Ascending aorta (tissue), 2 donors: ENCODE measurements at regions of chr14 and their contacts with region 1.

Region 1: DNA sequence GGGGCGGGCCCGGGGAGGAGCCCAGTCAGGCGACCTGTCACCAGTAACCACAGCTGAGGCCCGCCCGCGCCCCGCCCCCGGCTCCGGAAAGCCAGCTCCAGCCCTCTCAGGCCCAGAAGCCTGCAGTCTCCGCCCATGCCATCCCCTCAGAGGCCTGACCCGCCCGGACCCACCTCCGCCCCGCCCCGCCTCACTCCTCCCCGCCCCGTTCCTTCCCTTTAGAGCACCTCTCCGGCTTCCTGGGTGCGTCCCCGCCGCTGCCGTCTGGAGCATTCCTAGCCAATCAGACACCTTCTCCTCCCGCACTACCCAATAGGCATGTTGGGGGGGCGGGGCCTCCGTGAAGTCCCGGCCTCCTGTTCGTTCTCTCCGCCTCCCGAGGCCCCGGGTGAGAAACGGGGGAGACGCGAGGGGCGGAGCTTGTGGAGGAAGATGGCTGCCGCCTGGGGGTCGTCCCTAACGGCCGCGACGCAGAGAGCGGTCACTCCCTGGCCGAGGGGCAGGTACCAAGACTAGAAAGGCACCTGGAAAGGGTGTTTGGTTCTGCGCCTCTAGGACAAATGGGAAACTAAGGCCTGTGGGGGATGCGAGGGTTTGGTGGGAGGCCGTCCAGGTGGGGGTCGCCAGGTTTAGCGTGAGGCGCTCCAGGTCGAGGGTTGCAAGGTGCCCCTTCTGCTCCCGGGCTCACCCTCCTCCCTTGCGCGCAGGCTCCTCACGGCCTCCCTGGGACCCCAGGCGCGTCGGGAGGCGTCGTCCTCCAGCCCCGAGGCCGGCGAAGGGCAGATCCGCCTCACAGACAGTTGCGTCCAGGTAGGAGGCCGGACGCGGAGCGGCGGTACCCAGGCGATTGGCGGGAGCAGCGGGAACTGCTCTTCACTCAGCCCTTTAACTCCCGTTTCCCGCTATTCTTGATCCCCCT is at the start of gene ISCA2:
- DNase-seq: peak; percentile 99 to 100
- H3K4me3 ChIP-seq: peak within 1 kb of the TSS; percentile 91 to 93
- H3K27ac ChIP-seq: peak within 1 kb of the TSS; percentile 94 to 95
- H3K4me1 ChIP-seq: peaks cover 0 to 7% of the 10 kb centered on the region in 2 donors
- H3K27me3 ChIP-seq: no peaks in the 10 kb centered on the region
- CTCF ChIP-seq: no peak
- total RNA-seq, gene ISCA2: 10.0 TPM

Region 2: GRCh38 chr14:74362361-74362915 is 131.2 kb before region 1 on chr14:
- intact Hi-C with region 1: loop called (anchors 5 kb)
- DNase-seq: peak in 1 of 2 donors; percentile 88
- H3K4me3 ChIP-seq: no peak overlapping the region
- H3K27ac ChIP-seq: no peak overlapping the region
- H3K4me1 ChIP-seq: no peaks in the 10 kb centered on the region
- H3K27me3 ChIP-seq: no peaks in the 10 kb centered on the region
- CTCF ChIP-seq: peak; percentile 93 to 95 (median 94)

Region 3: GRCh38 chr14:74630881-74631690 is 137.5 kb after region 1 on chr14:
- intact Hi-C with region 1: no loop called
- DNase-seq: no peak
- H3K4me3 ChIP-seq: no peak overlapping the region
- H3K27ac ChIP-seq: peak overlapping the region; percentile 77 to 81
- H3K4me1 ChIP-seq: peaks cover 0 to 16% of the 10 kb centered on the region in 2 donors
- H3K27me3 ChIP-seq: no peaks in the 10 kb centered on the region
- CTCF ChIP-seq: no peak

Region 4: DNA sequence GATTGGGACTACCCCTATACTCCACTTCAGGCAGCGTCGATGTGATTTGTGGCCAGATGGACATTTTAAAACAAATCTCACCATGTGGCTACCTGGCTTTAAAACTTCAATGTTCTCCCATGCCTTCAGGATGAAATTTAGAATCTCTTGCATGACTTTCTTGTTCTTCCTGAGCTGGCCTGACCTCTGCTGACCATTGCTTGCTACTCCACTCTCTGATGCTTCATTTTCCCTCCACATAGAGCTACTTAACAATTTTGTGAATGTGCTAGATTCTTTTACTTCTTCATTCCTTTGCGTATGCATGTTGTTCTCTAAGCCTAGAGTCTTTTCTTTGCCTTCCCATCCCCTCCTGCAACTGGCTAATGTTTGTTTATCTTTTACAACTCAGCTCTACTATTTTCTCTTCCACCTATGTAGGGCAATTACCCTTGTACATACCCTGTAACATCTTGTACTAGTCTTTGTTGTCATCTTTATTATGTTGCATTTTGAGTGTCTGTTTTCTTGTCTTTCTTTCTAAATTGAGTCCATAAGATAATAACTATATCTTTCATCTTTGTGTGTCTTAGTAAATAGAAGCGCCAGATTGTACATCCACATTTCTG is 310.7 kb after region 1 on chr14:
- intact Hi-C with region 1: loop called (anchors 5 kb)
- DNase-seq: no peak
- H3K4me3 ChIP-seq: no peak overlapping the region
- H3K27ac ChIP-seq: no peak overlapping the region
- H3K4me1 ChIP-seq: no peaks in the 10 kb centered on the region
- H3K27me3 ChIP-seq: no peaks in the 10 kb centered on the region
- CTCF ChIP-seq: peak; percentile 24 to 65 (median 37)

Region 5: DNA sequence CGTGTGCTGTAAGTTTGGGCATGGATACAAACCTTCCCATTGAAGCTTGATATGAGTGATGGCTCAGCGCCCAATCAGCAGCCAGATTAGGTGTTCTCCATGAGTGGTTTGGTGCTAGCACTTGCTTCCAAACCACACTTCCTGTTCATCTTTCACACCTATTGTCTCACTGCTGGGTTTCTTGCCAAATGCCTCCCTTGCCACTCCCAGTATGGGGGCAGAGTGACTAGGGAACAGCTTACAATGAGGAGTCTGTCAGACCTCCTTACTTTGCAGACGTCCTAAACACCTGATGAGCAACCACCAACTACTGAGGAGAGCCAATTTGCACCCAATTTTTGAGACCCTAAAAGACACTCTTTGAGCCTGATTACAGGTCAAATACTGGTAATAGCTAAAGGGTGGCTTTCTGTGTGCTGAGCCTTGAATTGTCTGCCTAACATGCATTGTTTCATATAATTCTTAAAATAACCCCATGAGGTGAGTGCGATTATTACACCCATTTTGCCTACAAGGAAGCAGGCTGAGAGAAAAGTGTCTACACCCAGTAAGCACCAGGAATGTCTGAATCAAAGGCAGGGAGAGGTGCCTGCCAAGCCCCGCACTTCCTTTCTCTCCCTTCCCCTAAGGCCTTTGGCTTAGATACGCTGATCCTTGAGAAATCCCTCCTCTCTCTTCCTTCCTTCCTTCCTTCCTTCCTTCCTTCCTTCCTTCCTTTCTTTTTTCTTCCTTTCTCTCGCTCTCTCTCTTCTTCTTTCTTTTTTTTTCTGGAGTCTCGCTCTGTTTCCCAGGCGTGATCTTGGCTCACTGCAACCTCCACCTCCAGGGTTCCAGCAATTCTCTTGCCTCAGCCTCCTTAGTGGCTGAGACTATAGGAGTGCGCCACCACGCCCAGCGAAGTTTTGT is 736.8 kb after region 1 on chr14:
- intact Hi-C with region 1: no loop called
- DNase-seq: no peak
- H3K4me3 ChIP-seq: no peak overlapping the region
- H3K27ac ChIP-seq: no peak overlapping the region
- H3K4me1 ChIP-seq: peaks cover 0 to 3% of the 10 kb centered on the region in 2 donors
- H3K27me3 ChIP-seq: no peaks in the 10 kb centered on the region
- CTCF ChIP-seq: peak in 1 of 3 experiments; percentile 10

Region 6: DNA sequence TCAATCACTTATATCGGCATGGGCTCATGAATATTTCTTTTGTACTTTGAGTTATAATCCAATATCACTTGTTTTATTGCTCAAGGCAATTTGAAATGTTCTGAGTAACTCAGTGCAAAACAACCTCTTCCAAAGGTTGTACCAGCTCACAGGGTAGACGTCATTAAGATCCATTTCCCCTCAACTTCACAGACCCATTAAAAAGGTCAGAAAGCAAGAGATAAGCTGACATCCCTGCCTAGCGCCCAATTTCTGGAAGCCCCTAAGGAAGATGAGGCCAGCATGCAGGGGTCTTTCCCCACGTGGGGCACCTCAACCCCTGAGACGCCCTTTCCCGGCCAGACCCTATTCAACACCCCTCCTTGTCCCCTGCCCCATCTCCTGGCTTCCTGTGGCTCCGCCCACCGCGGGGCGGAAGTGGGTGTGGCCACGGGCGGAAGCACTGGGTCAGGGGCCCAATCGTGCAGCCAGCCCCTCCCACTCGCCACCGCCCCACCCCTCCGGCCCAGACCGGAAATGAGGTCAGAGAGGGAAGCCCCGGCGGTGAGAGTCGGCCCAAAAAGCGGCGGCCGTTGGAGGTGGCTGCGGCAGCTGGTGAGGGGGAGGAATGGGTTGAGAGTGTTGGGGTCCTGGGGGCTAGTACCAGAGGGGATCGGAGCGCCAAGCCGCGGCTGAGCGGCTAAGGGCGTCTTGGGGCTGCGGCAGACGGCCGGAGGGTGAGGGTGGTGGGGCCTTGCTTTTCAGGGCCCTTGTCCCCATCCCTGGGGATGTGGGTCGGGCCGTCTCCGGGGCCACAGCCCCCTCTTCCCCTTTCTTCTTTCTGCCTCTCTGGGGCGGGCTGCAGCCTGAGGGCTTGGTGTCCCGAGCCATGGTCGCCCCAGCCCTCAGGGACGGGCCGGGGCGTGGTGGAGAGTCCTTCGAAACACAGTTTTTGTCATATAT is 1658.1 kb after region 1 on chr14 and contains the start of gene GPATCH2L:
- intact Hi-C with region 1: loop called (anchors 10 kb)
- DNase-seq: peak; percentile 85 to 98
- H3K4me3 ChIP-seq: peak within 1 kb of the TSS; percentile 91 to 96
- H3K27ac ChIP-seq: peak within 1 kb of the TSS; percentile 83 to 87
- H3K4me1 ChIP-seq: peaks cover 8 to 27% of the 10 kb centered on the region in 2 donors
- H3K27me3 ChIP-seq: no peaks in the 10 kb centered on the region
- CTCF ChIP-seq: no peak
- total RNA-seq, gene GPATCH2L: 40.3 TPM